OCI-LY7 (cell line): ENCODE measurements at regions of chr14 and their contacts with region 1.

Region 1: GRCh38 chr14:87944987-87945604 is 47.9 kb downstream of the GALC start:
- DNase-seq: peak; percentile 56
- H3K4me3 ChIP-seq: no peak overlapping the region
- H3K27ac ChIP-seq: no peak overlapping the region
- H3K4me1 ChIP-seq: no peaks in the 10 kb centered on the region
- CTCF ChIP-seq: peak; percentile 93

Region 2: DNA sequence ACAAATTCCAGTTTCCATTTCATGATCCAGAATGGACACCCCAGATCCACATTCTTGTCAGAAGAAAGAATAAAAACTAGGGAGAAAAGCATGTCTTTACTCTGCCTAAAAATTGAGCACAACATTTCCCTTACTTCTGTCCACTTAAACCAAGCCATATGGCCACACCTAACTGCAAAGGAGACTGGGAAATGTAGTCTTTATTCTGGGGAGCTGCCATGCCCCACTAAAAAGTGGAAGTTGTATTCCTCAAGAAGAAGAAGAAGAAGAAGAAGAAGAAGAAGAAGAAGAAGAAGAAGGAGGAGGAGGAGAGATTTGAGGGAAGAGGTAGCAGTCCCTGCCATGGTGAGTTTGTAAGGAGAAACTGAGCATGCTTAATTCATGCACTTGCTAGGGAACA is 144.3 kb after region 1 on chr14:
- CTCF ChIA-PET with region 1: no interaction called
- POLR2A ChIA-PET with region 1: no interaction called
- intact Hi-C with region 1: no loop called
- DNase-seq: no peak
- H3K4me3 ChIP-seq: no peak overlapping the region
- H3K27ac ChIP-seq: no peak overlapping the region
- H3K4me1 ChIP-seq: no peaks in the 10 kb centered on the region
- CTCF ChIP-seq: no peak

Region 3: DNA sequence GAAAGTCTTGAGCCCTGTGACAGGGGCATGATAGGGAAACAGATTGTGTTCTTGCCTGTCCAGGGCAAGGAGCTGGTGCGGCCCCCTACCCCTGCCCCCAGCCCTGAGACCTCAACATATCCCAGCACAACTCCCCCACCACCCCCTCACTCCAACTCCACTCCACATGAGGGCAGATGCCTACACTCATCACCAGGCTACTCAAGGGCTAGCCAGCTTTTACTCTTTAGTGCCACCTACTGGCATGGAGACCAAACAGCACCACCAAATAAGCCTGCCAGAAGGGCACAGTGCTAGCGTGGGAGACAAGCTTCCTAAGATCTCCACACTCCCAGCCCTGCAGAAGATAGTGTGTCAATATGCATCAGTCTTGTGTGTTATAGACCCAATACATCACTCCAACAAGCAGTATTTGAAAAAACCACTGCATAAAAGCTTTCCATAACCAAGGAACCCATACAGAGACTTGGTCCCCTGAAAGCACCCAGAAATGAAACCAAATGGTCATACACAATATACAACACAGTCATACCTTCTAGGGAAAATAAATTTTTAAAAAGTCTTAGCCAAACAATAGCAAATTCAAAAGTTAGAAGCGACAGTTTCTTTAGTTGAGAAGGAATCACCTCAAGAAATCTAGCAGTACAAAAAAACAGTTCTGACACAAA is 223.5 kb after region 1 on chr14:
- CTCF ChIA-PET with region 1: interaction called, 9 read pairs
- POLR2A ChIA-PET with region 1: interaction called, 5 read pairs
- intact Hi-C with region 1: loop called (anchors 1 kb)
- DNase-seq: peak; percentile 50
- H3K4me3 ChIP-seq: no peak overlapping the region
- H3K27ac ChIP-seq: no peak overlapping the region
- H3K4me1 ChIP-seq: no peaks in the 10 kb centered on the region
- CTCF ChIP-seq: peak; percentile 82

Region 4: GRCh38 chr14:88189417-88190191 is 244.5 kb after region 1 on chr14:
- CTCF ChIA-PET with region 1: no interaction called
- POLR2A ChIA-PET with region 1: no interaction called
- intact Hi-C with region 1: loop called (anchors 1 kb)
- DNase-seq: peak; percentile 73
- H3K4me3 ChIP-seq: peak overlapping the region; percentile 40
- H3K27ac ChIP-seq: no peak overlapping the region
- H3K4me1 ChIP-seq: peaks cover 6% of the 10 kb centered on the region
- CTCF ChIP-seq: peak; percentile 91

Region 5: DNA sequence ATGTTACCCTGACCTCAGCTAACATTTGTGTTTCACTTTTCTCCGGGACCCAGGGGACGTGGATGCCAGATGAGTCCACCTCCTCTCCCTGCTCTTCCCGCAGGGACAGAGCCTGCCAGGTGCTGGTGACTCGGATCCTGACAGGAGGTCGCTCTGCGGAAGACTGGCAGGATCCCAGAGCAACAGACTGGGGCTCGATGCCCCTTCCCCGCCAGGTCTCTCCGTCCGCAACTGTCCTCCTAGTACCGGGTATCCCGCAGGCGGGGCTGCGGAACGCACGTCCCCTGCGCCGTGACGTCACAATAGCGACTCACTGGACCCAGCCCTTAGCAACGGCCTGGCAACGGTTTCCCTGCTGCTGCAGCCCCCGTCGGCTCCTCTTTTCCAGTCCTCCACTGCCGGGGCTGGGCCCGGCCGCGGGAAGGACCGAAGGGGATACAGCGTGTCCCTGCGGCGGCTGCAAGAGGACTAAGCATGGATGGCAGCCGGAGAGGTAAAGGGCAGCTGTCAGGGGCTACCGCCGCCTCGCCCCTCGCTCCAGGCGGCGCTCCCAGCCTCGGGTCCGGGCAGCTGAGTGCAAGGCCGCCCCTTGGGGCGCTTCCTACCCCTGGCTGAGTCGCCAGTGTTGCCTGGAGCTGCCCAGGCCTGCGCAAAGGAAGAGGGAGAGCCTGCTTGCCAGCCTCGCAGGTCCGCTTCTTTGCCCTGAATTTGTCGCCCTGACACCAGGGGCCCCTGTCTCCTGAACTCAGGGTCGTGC is 440.4 kb after region 1 on chr14 and contains the start of gene SPATA7:
- CTCF ChIA-PET with region 1: no interaction called
- POLR2A ChIA-PET with region 1: no interaction called
- intact Hi-C with region 1: loop called (anchors 10 kb)
- DNase-seq: peak; percentile 90
- H3K4me3 ChIP-seq: peak within 1 kb of the TSS; percentile 89
- H3K27ac ChIP-seq: no peak within 1 kb of the TSS
- H3K4me1 ChIP-seq: peaks cover 16% of the 10 kb centered on the region
- CTCF ChIP-seq: no peak
- total RNA-seq, gene SPATA7: 7.3 and 10.3 TPM in 2 replicates

Region 6: GRCh38 chr14:89826596-89826995 is 1881.5 kb after region 1 on chr14:
- CTCF ChIA-PET with region 1: no interaction called
- POLR2A ChIA-PET with region 1: interaction called, 11 read pairs
- intact Hi-C with region 1: no loop called
- DNase-seq: no peak
- H3K4me3 ChIP-seq: no peak overlapping the region
- H3K27ac ChIP-seq: no peak overlapping the region
- H3K4me1 ChIP-seq: no peaks in the 10 kb centered on the region
- CTCF ChIP-seq: no peak